HepG2 (cell line): ENCODE measurements at regions of chr11 and their contacts with region 1.

Region 1: GRCh38 chr11:61899146-61899841 is 7.9 kb upstream of the FADS3 start:
- DNase-seq: peak; percentile 72
- ATAC-seq: peak; percentile 85
- H3K4me3 ChIP-seq: no peak overlapping the region
- H3K27ac ChIP-seq: no peak overlapping the region
- H3K4me1 ChIP-seq: peaks cover 24% of the 10 kb centered on the region
- H3K27me3 ChIP-seq: no peaks in the 10 kb centered on the region
- CTCF ChIP-seq: peak; percentile 99
- EP300 ChIP-seq: no peak
- POLR2A ChIP-seq: no peak
- RAD21 ChIP-seq: peak; percentile 98

Region 2: GRCh38 chr11:61871158-61871597 is 28.1 kb before region 1 on chr11:
- CTCF ChIA-PET with region 1: interaction called, 10 read pairs
- POLR2A ChIA-PET with region 1: no interaction called
- in situ Hi-C with region 1: no loop called
- intact Hi-C with region 1: no loop called
- DNase-seq: peak; percentile 64
- ATAC-seq: peak; percentile 88
- H3K4me3 ChIP-seq: peak overlapping the region in 2 of 3 experiments; percentile 4 to 44; a peak in 2 of 6 replicates
- H3K27ac ChIP-seq: no peak overlapping the region
- H3K4me1 ChIP-seq: peaks cover 26% of the 10 kb centered on the region
- H3K27me3 ChIP-seq: 0 out of 5 replicates have a peak, but pooled peaks cover 0 to 6% of the 10 kb centered on the region in 2 experiments
- CTCF ChIP-seq: peak; percentile 98
- EP300 ChIP-seq: no peak
- POLR2A ChIP-seq: no peak
- RAD21 ChIP-seq: peak; percentile 96

Region 3: GRCh38 chr11:61947486-61948210 is 48.4 kb after region 1 on chr11:
- CTCF ChIA-PET with region 1: interaction called, 124 read pairs
- POLR2A ChIA-PET with region 1: interaction called, 21 read pairs
- in situ Hi-C with region 1: loop called (anchors 5 kb)
- intact Hi-C with region 1: loop called (anchors 1 kb)
- DNase-seq: peak; percentile 73
- ATAC-seq: peak; percentile 85
- H3K4me3 ChIP-seq: no peak overlapping the region
- H3K27ac ChIP-seq: no peak overlapping the region
- H3K4me1 ChIP-seq: peaks cover 21% of the 10 kb centered on the region; the same call in 1 of the 2 replicates
- H3K27me3 ChIP-seq: peaks cover 1 to 19% of the 10 kb centered on the region in 2 experiments; a peak in 3 of 5 replicates
- CTCF ChIP-seq: peak; percentile 97
- EP300 ChIP-seq: no peak
- POLR2A ChIP-seq: no peak
- RAD21 ChIP-seq: peak; percentile 99

Region 4: DNA sequence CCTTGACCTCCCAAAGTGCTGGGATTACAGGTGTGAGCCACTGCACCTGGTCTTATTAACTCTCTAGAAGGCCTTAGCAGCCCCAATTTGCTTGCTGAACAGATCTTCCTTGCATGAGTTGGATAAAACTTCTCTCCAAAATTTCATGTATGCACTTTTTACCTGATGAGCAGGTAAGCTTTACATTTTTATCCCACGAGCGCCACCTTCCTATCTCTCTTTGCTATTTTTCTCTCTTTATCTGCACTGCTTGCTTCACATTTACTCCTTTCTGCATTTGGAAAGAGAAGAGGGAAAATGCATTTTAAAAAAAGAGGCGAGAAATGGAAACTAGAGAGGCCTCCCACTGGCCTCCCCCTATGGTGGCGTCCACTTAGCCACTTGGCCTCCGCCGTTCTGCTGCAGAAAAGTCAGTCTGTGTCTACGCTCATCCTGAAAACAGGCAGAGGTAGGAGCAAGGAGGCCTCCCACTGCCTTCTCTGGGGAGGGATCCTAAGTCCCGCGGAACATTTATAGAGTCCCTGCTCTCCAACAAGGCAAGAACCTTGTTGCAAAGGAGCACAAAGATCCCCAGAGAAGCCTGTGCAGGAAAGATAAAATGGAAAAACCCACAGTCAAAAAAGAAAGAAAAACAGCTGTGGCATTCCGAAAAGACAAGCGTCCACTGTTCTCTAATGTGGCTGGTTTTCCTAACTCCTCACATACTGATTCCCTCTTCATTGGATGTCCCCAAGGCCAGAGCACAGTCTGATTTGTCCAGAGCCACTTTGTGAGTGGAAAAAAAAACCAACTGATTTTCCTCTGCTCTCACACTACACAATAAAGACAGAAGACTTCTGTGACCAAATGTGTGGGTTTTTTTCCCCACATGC is 162.3 kb after region 1 on chr11:
- CTCF ChIA-PET with region 1: interaction called, 20 read pairs
- POLR2A ChIA-PET with region 1: interaction called, 3 read pairs
- in situ Hi-C with region 1: loop called (anchors 5 kb)
- intact Hi-C with region 1: no loop called
- DNase-seq: peak; percentile 38
- ATAC-seq: no peak
- H3K4me3 ChIP-seq: no peak overlapping the region
- H3K27ac ChIP-seq: no peak overlapping the region
- H3K4me1 ChIP-seq: no peaks in the 10 kb centered on the region
- H3K27me3 ChIP-seq: peaks cover 0 to 3% of the 10 kb centered on the region in 2 experiments; a peak in 1 of 5 replicates
- CTCF ChIP-seq: peak; percentile 50
- EP300 ChIP-seq: no peak
- POLR2A ChIP-seq: no peak
- RAD21 ChIP-seq: peak; percentile 47; the same call in 1 of the 2 replicates

Region 5: GRCh38 chr11:62108017-62108750 is 208.9 kb after region 1 on chr11:
- CTCF ChIA-PET with region 1: interaction called, 20 read pairs
- POLR2A ChIA-PET with region 1: interaction called, 4 read pairs
- in situ Hi-C with region 1: no loop called
- intact Hi-C with region 1: no loop called
- DNase-seq: peak; percentile 65
- ATAC-seq: peak; percentile 73
- H3K4me3 ChIP-seq: no peak overlapping the region
- H3K27ac ChIP-seq: no peak overlapping the region
- H3K4me1 ChIP-seq: peaks cover 30% of the 10 kb centered on the region
- H3K27me3 ChIP-seq: peaks cover 0 to 6% of the 10 kb centered on the region in 2 experiments; a peak in 2 of 5 replicates
- CTCF ChIP-seq: peak; percentile 84
- EP300 ChIP-seq: no peak
- POLR2A ChIP-seq: no peak
- RAD21 ChIP-seq: peak; percentile 76